Naive thymus-derived CD4-positive, alpha-beta T cell (primary cell): ENCODE measurements at regions of chr10 and their contacts with region 1.

Region 1: DNA sequence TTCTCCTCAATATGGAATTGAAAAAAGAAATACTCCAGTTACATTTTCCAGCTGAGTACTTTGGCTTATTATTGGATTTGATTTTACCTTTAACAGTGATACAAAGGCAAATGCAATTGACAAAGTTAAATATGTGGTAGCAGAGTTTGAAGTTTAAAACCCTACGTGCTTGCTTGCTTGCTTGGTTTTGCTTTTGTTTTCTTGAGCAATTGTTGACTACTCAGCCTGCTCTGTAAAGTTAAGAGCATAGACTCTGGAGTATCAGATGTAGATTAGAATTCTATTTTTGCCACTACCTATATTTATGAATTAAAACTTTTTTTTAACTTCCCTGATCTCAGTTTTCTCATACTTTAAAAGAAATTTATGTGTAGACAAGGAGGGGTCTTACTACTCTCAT is 51.4 kb downstream of the PCDH15 start:
- DNase-seq: no peak
- ATAC-seq: no peak
- H3K4me3 ChIP-seq: no peak overlapping the region
- H3K4me3 Mint-ChIP-seq: no peak overlapping the region
- H3K27ac ChIP-seq: no peak overlapping the region
- H3K27ac Mint-ChIP-seq: no peak overlapping the region
- H3K4me1 ChIP-seq: no peaks in the 10 kb centered on the region
- H3K4me1 Mint-ChIP-seq: no peaks in the 10 kb centered on the region
- H3K27me3 ChIP-seq: no peaks in the 10 kb centered on the region
- H3K27me3 Mint-ChIP-seq: no peaks in the 10 kb centered on the region

Region 2: DNA sequence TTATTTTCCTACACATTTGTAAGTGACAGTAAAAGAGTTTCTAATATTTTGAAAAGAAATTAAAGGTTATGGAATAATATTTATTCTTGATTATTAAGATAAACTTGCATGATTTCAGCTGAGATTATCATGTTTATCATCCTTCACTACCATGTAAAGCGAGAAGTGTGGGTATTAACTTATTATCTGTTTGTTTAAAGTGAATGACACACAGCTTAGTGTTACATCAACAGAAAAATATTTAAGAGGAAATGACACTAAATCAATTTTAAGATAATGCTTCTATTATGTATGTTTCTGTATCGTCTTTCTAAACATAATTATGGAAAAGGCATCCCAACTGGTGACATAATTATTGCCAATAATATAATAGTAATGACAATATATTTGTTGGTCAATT is 161.7 kb before region 1 on chr10:
- CTCF ChIA-PET with region 1: no interaction called
- POLR2A ChIA-PET with region 1: no interaction called
- intact Hi-C with region 1: no loop called
- DNase-seq: no peak
- ATAC-seq: no peak
- H3K4me3 ChIP-seq: no peak overlapping the region
- H3K4me3 Mint-ChIP-seq: no peak overlapping the region
- H3K27ac ChIP-seq: no peak overlapping the region
- H3K27ac Mint-ChIP-seq: no peak overlapping the region
- H3K4me1 ChIP-seq: no peaks in the 10 kb centered on the region
- H3K4me1 Mint-ChIP-seq: no peaks in the 10 kb centered on the region
- H3K27me3 ChIP-seq: no peaks in the 10 kb centered on the region
- H3K27me3 Mint-ChIP-seq: no peaks in the 10 kb centered on the region

Region 3: DNA sequence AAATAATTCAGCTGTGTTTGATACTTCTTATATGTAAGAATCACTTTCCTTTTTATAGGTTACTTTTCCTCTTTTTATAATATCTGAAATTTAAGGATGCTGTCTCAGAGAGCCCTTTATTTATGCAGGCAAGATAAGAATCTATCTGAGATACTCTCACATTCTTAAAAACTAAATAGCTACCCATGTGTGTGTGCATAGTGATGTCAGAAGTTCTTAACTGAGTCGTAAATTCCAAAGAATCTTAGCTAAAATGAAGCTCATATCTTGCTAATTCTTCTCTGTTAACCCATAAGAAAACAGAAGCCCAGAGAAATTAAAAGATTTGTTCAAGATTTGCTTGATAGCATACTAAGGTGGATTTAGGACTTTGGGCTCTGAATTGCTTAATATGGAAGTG is 67.1 kb before region 1 on chr10:
- CTCF ChIA-PET with region 1: no interaction called
- POLR2A ChIA-PET with region 1: no interaction called
- intact Hi-C with region 1: loop called in 1 of 2 experiments (anchors 10 kb)
- DNase-seq: no peak
- ATAC-seq: no peak
- H3K4me3 ChIP-seq: no peak overlapping the region
- H3K4me3 Mint-ChIP-seq: no peak overlapping the region
- H3K27ac ChIP-seq: no peak overlapping the region
- H3K27ac Mint-ChIP-seq: no peak overlapping the region
- H3K4me1 ChIP-seq: no peaks in the 10 kb centered on the region
- H3K4me1 Mint-ChIP-seq: no peaks in the 10 kb centered on the region
- H3K27me3 ChIP-seq: no peaks in the 10 kb centered on the region
- H3K27me3 Mint-ChIP-seq: no peaks in the 10 kb centered on the region